ENCODE measurements at regions of chr20 and their contacts with region 1.

Region 1: GRCh38 chr20:11544029-11544678 is 373.5 kb upstream of the BTBD3 start:
- DNase-seq: peak; percentile 48
- ATAC-seq: peak; percentile 90
- H3K4me3 ChIP-seq: peak overlapping the region in 1 of 2 experiments; percentile 32; a peak in 2 of 4 replicates
- H3K27ac ChIP-seq: peak overlapping the region; percentile 86
- H3K4me1 ChIP-seq: peaks cover 16% of the 10 kb centered on the region
- H3K27me3 ChIP-seq: no peaks in the 10 kb centered on the region
- CTCF ChIP-seq: peak; percentile 63

Region 2: GRCh38 chr20:9989066-9989724 is 1555.0 kb before region 1 on chr20:
- CTCF ChIA-PET with region 1: no interaction called
- POLR2A ChIA-PET with region 1: no interaction called
- in situ Hi-C with region 1: no loop called
- intact Hi-C with region 1: loop called (anchors 10 kb)
- DNase-seq: no peak
- ATAC-seq: no peak
- H3K4me3 ChIP-seq: no peak overlapping the region
- H3K27ac ChIP-seq: no peak overlapping the region
- H3K4me1 ChIP-seq: no peaks in the 10 kb centered on the region
- H3K27me3 ChIP-seq: no peaks in the 10 kb centered on the region
- CTCF ChIP-seq: no peak

Region 3: DNA sequence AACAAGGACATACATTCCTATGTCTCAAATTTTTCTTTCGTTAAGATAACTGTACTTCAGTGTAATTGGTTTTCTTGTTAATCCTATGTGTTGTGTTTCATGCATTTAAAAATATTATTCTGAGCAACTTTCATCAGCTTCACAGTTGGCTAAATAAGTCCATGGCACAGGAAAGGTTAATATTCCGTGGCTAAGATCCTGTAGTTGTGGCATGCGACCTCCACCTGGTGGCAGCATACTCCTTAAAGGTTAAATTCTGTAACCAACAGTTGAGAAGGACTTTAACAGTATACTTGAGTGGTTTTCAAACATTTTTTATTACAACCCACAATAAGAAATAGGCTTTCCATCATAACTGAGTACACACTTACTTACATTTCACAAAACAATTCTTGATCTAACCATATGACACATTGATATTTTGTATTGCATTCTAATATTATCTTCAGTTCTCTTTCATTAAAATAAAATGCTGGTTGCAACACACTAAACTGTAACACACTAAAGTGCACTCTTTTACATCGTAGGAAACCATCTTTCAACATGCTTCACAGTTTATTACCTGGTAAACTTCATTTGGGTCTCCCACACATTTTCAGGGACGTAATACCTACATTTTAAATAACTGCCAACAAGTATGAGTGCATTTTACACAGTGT is 990.7 kb before region 1 on chr20:
- CTCF ChIA-PET with region 1: no interaction called
- POLR2A ChIA-PET with region 1: no interaction called
- in situ Hi-C with region 1: no loop called
- intact Hi-C with region 1: loop called (anchors 5 kb)
- DNase-seq: no peak
- ATAC-seq: peak; percentile 81
- H3K4me3 ChIP-seq: no peak overlapping the region
- H3K27ac ChIP-seq: peak overlapping the region; percentile 8; the same call in 1 of the 2 replicates
- H3K4me1 ChIP-seq: peaks cover 18% of the 10 kb centered on the region
- H3K27me3 ChIP-seq: no peaks in the 10 kb centered on the region
- CTCF ChIP-seq: peak; percentile 80; the same call in 1 of the 2 replicates

Region 4: DNA sequence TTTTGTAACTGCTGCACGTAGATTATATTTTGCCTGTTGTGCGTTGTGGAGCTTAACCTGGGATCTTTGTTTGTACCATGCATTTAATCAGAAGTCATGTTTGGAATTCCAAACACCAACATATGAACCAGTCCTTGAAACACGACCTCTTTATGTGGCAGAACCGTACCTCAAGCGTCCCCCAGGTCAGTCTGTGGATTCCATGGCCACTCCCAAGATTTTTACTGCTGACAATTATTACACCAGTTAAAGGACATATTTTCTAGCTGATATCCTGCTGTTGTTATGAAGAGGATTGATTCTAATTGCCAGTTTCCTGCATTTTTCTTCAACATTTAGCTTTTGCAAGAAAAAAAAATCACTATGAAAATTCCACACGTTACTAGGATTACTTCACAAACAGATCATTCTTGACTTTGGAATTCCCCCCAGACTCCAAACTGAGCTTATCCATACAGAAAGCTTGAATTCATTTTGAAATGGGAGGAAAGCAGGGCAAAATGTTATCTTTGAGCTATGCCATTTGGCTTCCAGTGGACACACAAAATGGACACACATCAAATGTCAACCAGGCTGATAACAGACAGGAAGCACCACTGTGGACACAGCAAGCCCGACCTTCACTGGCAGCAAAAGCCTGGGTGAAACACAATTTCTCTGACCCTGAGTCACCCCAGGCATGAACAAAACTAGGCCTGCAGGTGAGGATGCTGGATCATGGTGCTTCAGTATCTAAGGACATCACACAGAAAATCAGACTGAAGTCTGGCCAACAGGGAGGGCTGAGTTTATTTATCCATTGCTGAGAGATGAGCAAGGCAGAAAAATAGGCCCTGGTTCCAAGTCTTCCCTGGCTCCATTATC is 327.5 kb before region 1 on chr20:
- CTCF ChIA-PET with region 1: no interaction called
- POLR2A ChIA-PET with region 1: no interaction called
- in situ Hi-C with region 1: no loop called
- intact Hi-C with region 1: loop called (anchors 10 kb)
- DNase-seq: no peak
- ATAC-seq: peak; percentile 62
- H3K4me3 ChIP-seq: no peak overlapping the region
- H3K27ac ChIP-seq: no peak overlapping the region
- H3K4me1 ChIP-seq: peaks cover 11% of the 10 kb centered on the region
- H3K27me3 ChIP-seq: no peaks in the 10 kb centered on the region
- CTCF ChIP-seq: no peak

Region 5: GRCh38 chr20:11274141-11274594 is 270.0 kb before region 1 on chr20:
- CTCF ChIA-PET with region 1: no interaction called
- POLR2A ChIA-PET with region 1: no interaction called
- in situ Hi-C with region 1: no loop called
- intact Hi-C with region 1: loop called (anchors 2 kb)
- DNase-seq: peak; percentile 76
- ATAC-seq: peak; percentile 96
- H3K4me3 ChIP-seq: no peak overlapping the region
- H3K27ac ChIP-seq: peak overlapping the region; percentile 68; the same call in 1 of the 2 replicates
- H3K4me1 ChIP-seq: peaks cover 10% of the 10 kb centered on the region; the same call in 1 of the 2 replicates
- H3K27me3 ChIP-seq: no peaks in the 10 kb centered on the region
- CTCF ChIP-seq: peak; percentile 77

Region 6: GRCh38 chr20:11454966-11455799 is 89.0 kb before region 1 on chr20:
- CTCF ChIA-PET with region 1: no interaction called
- POLR2A ChIA-PET with region 1: interaction called, 3 read pairs
- in situ Hi-C with region 1: no loop called
- intact Hi-C with region 1: loop called (anchors 5 kb)
- DNase-seq: peak; percentile 36
- ATAC-seq: peak; percentile 92
- H3K4me3 ChIP-seq: peak overlapping the region; percentile 13 to 24
- H3K27ac ChIP-seq: peak overlapping the region; percentile 93
- H3K4me1 ChIP-seq: peaks cover 23% of the 10 kb centered on the region
- H3K27me3 ChIP-seq: no peaks in the 10 kb centered on the region
- CTCF ChIP-seq: no peak